Vagina (tissue), 2 donors: ENCODE measurements at regions of chr1 and their contacts with region 1.

Region 1: GRCh38 chr1:11617310-11617709 is 36.9 kb downstream of the FBXO2 start:
- DNase-seq: no peak
- H3K4me3 ChIP-seq: no peak overlapping the region
- H3K27ac ChIP-seq: no peak overlapping the region
- H3K4me1 ChIP-seq: no peaks in the 10 kb centered on the region
- H3K27me3 ChIP-seq: no peaks in the 10 kb centered on the region
- CTCF ChIP-seq: no peak
- POLR2A ChIP-seq: no peak

Region 2: DNA sequence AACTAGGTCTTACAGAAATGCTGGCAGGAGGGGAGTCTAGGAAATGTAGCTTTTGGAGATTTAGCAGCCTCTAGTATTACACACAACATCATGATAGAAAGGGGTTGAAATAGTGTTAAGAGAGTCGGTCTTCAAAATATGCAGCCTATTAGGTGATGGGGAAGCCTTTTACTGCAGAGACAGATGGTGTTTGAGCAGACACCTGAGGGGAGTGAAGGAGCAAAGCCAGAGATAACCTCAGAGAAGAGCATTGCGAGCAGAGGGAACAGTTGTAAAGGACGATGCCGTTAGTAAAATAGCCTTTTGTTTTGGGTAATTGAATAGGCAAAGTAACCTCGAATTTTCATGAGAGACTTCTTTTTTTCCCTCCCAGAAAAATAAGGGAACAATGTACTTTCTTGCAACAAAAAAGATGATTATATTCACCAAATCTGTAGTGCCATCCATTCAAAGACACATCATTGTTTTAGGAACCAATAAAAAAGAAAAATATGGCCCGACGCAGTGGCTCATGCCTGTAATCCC is 1473.3 kb before region 1 on chr1:
- intact Hi-C with region 1: no loop called
- DNase-seq: no peak
- H3K4me3 ChIP-seq: no peak overlapping the region
- H3K27ac ChIP-seq: no peak overlapping the region
- H3K4me1 ChIP-seq: no peaks in the 10 kb centered on the region
- H3K27me3 ChIP-seq: no peaks in the 10 kb centered on the region
- CTCF ChIP-seq: no peak
- POLR2A ChIP-seq: no peak

Region 3: DNA sequence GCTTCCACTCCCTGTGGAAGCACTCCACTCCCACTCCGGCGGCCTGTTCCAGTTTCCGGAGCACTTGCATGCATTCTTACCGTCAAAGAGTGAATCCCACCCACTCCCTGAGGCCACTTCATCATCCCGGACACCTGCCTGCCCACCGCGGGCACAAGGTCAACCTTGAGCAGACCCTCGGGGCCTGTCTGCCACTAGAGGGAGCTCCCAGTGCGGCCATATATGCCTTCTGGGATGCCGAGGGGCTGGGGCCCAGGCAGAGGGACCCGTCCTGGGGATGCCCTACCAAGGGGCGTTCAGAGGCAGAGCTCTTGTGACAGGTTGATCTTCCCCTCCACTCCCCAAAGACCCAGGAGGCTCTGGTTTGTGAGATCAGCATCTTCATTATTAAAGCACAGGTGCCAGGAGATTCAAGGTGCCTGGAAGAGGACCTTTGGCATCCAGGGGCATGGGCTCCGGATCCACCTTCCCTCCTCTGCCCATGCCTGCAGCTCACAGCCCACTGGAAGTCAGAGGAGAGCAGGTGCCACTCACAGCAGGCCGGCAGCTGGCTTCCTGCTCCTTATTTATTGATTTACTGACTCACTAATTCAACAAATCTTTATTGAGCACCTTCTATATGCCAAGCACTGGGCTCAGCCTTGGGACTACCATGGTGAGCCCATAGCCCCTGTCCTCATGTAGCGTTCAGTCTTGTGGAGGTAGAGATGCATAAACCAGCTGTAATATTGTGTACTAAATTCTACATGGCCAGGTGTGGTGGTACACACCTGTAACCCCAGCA is 297.0 kb before region 1 on chr1:
- intact Hi-C with region 1: loop called (anchors 10 kb)
- DNase-seq: no peak
- H3K4me3 ChIP-seq: no peak overlapping the region
- H3K27ac ChIP-seq: no peak overlapping the region
- H3K4me1 ChIP-seq: no peaks in the 10 kb centered on the region
- H3K27me3 ChIP-seq: no peaks in the 10 kb centered on the region
- CTCF ChIP-seq: no peak
- POLR2A ChIP-seq: no peak

Region 4: DNA sequence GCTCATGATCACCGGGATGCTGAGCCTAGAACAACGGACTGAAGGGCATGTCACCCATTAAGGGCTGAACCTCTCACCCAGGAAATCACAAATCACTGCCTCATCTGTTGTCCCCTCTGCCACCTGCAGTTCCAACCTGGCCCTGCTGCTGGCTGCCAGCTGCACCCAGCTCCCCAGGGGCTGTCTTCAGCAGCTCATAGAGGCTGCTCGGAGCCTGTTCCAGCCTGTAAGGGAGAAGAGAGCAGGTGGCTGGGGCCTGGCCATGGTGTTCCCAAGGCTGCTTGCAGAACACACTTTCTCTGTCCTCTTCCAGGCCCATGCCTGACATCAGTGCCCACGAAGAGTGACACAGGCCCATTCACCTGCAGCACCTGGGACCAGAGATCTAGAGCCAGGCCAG is 182.8 kb before region 1 on chr1:
- intact Hi-C with region 1: no loop called
- DNase-seq: no peak
- H3K4me3 ChIP-seq: no peak overlapping the region
- H3K27ac ChIP-seq: no peak overlapping the region
- H3K4me1 ChIP-seq: no peaks in the 10 kb centered on the region
- H3K27me3 ChIP-seq: no peaks in the 10 kb centered on the region
- CTCF ChIP-seq: no peak
- POLR2A ChIP-seq: no peak

Region 5: GRCh38 chr1:11645670-11646265 is 28.5 kb after region 1 on chr1:
- intact Hi-C with region 1: no loop called
- DNase-seq: no peak
- H3K4me3 ChIP-seq: no peak overlapping the region
- H3K27ac ChIP-seq: no peak overlapping the region
- H3K4me1 ChIP-seq: peaks cover 24% of the 10 kb centered on the region
- H3K27me3 ChIP-seq: peaks cover 9% of the 10 kb centered on the region
- CTCF ChIP-seq: peak; percentile 3 to 59 (median 52)
- POLR2A ChIP-seq: no peak

Region 6: GRCh38 chr1:11661103-11661502 is 43.8 kb after region 1 on chr1:
- intact Hi-C with region 1: no loop called
- DNase-seq: no peak
- H3K4me3 ChIP-seq: no peak overlapping the region
- H3K27ac ChIP-seq: no peak overlapping the region
- H3K4me1 ChIP-seq: peaks cover under 1% of the 10 kb centered on the region
- H3K27me3 ChIP-seq: no peaks in the 10 kb centered on the region
- CTCF ChIP-seq: no peak
- POLR2A ChIP-seq: no peak